ENCODE measurements at regions of chr5 and their contacts with region 1.

Region 1: DNA sequence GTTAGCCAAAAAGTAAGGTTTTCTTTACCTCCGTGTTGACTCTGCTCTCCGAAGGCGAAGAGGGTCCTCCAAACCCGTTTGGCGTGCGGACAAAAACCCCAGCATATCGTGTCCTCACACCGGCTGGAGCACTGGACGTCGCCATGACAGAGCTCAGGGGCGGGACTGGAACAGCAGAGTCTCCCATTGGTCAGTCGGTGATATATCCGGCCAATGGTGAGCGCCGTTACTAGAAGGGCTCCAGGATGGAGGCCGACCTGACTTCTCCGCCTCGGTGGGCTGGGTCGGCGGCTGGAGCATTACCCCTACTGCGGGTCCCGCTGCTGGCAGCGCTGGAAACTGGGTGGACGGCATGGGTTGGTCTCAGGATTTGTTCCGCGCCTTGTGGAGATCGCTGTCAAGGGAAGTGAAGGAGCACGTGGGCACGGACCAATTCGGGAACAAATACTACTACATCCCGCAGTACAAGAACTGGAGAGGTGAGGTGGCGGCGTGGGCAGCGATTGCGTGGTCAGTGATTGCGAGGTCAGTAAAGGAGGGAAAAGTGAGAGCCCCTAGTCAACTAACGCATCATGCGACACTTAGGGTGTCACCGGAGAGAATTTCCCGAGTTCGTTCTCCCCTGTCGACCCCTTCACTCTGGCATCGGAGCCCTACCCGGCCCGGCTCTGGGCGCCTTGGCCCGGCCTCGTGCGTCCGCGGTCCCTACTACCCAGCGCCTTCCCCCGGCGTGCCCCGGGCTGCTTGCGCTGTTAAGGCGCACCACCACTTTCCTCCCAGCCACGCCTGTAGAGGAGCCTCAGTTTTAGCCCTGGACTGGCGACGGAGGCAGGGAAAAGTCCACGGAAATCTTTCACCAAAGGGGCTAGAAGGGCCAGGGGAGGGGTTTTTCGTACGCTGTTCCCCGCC is at the starts of genes ERCC8 and NDUFAF2:
- DNase-seq: peak; percentile 79
- ATAC-seq: peak; percentile 94
- H3K4me3 ChIP-seq: peak within 1 kb of the TSS; percentile 78
- H3K27ac ChIP-seq: peak within 1 kb of the TSS; percentile 45
- H3K4me1 ChIP-seq: peaks cover 12% of the 10 kb centered on the region; the same call in 1 of the 2 replicates
- H3K27me3 ChIP-seq: no peaks in the 10 kb centered on the region
- CTCF ChIP-seq: no peak
- total RNA-seq, gene ERCC8: 2.1 and 2.6 TPM in 2 replicates
- total RNA-seq, gene NDUFAF2: 39.3 and 41.9 TPM in 2 replicates

Region 2: DNA sequence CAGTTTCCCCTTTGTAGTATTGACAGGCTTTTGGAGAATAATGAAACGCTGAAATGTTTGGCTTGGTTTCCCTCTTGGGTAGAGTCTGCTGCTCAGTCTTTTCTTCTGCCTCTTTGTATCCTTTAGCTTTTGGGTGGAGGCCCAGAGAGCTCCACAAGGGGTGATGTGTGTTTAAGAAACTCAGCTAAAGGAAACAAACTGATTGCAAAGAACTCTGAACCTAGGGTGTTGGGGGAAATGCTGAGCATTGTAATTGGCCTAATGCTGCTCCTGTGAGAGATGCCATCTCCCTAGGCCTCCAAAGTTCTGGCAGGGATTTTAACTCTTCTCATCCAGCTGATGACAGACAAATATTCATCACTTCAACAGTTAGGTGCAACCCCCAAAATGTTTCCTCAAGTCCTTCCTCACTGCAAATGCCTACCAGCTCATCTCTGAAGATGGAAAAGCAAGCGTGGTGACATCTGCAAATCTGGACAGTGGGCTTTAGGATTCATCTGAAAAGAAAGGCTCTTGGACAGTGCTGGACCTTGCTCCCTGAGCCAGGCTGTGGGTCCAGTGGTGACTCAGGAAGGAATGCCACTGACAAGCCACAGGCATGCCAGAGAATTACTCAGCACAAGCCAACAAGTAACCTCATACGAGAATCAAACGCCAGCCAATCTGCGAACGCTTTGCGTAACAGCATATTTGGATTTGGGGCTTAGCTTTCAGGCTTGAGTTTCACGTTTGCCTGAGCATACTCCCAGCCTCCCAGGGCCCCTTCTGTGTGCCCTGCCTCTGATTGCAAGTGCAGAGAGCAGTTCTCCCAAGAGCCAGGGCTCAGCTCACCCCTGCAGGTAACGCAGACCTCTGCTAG is 356.4 kb after region 1 on chr5:
- CTCF ChIA-PET with region 1: no interaction called
- POLR2A ChIA-PET with region 1: interaction called, 5 read pairs
- intact Hi-C with region 1: loop called (anchors 5 kb)
- DNase-seq: peak; percentile 94
- ATAC-seq: peak; percentile 86
- H3K4me3 ChIP-seq: peak overlapping the region; percentile 63
- H3K27ac ChIP-seq: peak overlapping the region; percentile 97
- H3K4me1 ChIP-seq: peaks cover 74% of the 10 kb centered on the region
- H3K27me3 ChIP-seq: no peaks in the 10 kb centered on the region
- CTCF ChIP-seq: no peak

Region 3: GRCh38 chr5:61519728-61520277 is 574.6 kb after region 1 on chr5:
- CTCF ChIA-PET with region 1: no interaction called
- POLR2A ChIA-PET with region 1: no interaction called
- intact Hi-C with region 1: no loop called
- DNase-seq: no peak
- ATAC-seq: no peak
- H3K4me3 ChIP-seq: no peak overlapping the region
- H3K27ac ChIP-seq: no peak overlapping the region
- H3K4me1 ChIP-seq: no peaks in the 10 kb centered on the region
- H3K27me3 ChIP-seq: no peaks in the 10 kb centered on the region
- CTCF ChIP-seq: no peak

Measured in PC-3 (cell line).